B cell (primary cell): ENCODE measurements at regions of chr9 and their contacts with region 1.

Region 1: DNA sequence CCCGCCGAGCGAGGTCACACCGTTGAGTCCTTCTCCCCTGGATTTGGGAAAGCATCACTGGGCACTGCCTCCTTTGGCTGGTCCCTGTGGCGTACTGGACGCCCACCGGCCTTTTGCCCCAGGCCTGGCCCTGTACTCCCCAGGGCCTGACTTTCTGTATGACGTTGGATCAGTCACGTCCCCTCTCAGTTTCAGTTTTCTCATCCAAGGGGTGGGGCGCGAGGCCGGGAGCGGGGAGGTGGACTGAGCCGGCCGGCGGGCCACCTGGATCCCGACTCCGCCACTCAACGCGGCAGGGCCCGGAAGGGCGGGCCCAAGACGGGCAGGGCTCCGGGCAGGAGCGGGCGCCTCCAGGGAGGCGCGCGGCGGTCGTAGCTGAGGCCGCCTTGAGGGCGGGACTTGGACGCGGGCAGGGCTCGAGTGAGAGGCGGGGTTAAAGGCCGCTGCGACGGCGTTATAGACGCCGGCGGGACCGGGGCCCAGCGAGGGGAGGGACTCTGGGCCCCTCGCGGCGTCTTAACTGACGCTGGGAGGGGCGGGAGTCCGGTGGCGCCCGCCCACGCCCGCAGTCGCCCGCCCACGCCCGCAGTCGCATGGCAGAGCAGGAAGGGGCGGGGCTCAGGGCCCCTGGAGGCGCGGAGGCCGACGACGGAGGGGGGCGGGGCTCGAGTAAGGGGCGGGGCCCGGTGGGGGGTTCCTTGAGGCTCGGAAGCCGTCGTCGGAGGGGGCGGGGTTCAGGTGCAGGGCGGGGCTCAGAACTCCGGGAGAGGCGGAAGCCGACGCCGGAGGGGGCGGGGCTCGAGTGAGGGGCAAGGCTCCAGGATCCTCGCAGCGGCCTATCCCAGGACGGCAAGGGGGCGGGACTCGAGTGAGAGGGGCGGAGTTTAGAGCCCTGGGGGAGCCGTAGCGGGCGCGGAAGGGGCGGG is 549 bp upstream of the CARD19 start:
- DNase-seq: peak; percentile 100
- ATAC-seq: peak; percentile 81
- H3K4me3 ChIP-seq: peak overlapping the region in 4 of 5 experiments; percentile 58 to 81 (median 77)
- H3K4me3 Mint-ChIP-seq: peak overlapping the region; percentile 82
- H3K27ac ChIP-seq: peak overlapping the region; percentile 97 to 98
- H3K27ac Mint-ChIP-seq: peak overlapping the region; percentile 95
- H3K4me1 ChIP-seq: peaks cover 68 to 80% of the 10 kb centered on the region in 2 donors
- H3K4me1 Mint-ChIP-seq: peaks cover 76% of the 10 kb centered on the region
- H3K27me3 ChIP-seq: no peaks in the 10 kb centered on the region
- H3K27me3 Mint-ChIP-seq: no peaks in the 10 kb centered on the region
- CTCF ChIP-seq: no peak

Region 2: GRCh38 chr9:92115071-92115858 is 980.2 kb before region 1 on chr9 and contains the start of gene SPTLC1:
- CTCF ChIA-PET with region 1: no interaction called
- POLR2A ChIA-PET with region 1: no interaction called
- intact Hi-C with region 1: loop called (anchors 10 kb)
- DNase-seq: peak; percentile 97
- ATAC-seq: peak; percentile 98
- H3K4me3 ChIP-seq: peak within 1 kb of the TSS; percentile 63 to 91 (median 83)
- H3K4me3 Mint-ChIP-seq: peak within 1 kb of the TSS; percentile 99
- H3K27ac ChIP-seq: peak within 1 kb of the TSS; percentile 81 to 96
- H3K27ac Mint-ChIP-seq: peak within 1 kb of the TSS; percentile 99
- H3K4me1 ChIP-seq: peaks cover 15 to 16% of the 10 kb centered on the region in 2 donors
- H3K4me1 Mint-ChIP-seq: peaks cover 29% of the 10 kb centered on the region
- H3K27me3 ChIP-seq: no peaks in the 10 kb centered on the region
- H3K27me3 Mint-ChIP-seq: no peaks in the 10 kb centered on the region
- CTCF ChIP-seq: no peak
- total RNA-seq, gene SPTLC1: 53.5 and 57.3 TPM in 2 replicates

Region 3: DNA sequence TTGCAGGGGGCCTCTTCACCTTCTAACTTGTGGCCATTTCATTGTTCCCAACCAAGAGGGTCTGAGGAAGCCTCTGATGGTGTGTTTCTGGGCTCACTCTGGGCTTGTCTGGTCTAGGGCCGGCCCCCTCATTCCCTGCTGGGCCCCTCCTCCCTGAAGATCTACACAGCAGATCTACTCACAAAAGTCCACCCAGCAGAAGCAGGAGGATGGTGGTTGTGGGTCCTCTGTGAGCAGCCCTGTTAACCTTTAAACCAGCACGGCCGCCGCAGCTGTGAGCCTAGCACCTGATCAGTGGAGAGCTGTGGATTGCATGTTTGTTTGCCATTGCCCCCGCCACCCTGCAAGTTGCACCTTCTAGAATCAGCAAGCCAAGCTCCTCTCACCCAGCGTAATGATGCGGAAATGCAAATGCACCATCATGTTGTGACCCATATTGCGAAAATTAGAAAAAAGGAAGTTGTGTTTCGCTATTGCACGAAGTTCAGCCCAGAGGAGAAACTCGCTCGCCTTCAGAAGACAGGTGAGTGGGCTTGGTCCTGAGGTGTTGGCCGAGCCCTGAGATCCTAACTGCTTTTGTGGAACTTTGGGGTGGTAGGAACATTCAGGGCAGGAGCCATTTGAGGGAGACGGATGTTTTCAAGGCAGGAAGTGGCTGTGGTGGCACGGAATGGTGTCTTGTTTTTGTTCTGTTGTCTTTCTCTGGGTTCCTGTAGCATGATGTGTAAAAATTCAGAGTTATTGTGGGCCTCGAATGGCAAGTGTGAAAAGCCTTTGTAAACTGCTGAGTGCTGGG is 131.4 kb before region 1 on chr9:
- CTCF ChIA-PET with region 1: no interaction called
- POLR2A ChIA-PET with region 1: interaction called, 6 read pairs
- intact Hi-C with region 1: loop called (anchors 1 kb)
- DNase-seq: peak; percentile 88
- ATAC-seq: peak; percentile 80
- H3K4me3 ChIP-seq: peak overlapping the region; percentile 75 to 92 (median 86)
- H3K4me3 Mint-ChIP-seq: peak overlapping the region; percentile 96
- H3K27ac ChIP-seq: peak overlapping the region; percentile 78 to 83
- H3K27ac Mint-ChIP-seq: peak overlapping the region; percentile 98
- H3K4me1 ChIP-seq: peaks cover 58 to 74% of the 10 kb centered on the region in 2 donors
- H3K4me1 Mint-ChIP-seq: peaks cover 75% of the 10 kb centered on the region
- H3K27me3 ChIP-seq: no peaks in the 10 kb centered on the region
- H3K27me3 Mint-ChIP-seq: no peaks in the 10 kb centered on the region
- CTCF ChIP-seq: no peak

Region 4: DNA sequence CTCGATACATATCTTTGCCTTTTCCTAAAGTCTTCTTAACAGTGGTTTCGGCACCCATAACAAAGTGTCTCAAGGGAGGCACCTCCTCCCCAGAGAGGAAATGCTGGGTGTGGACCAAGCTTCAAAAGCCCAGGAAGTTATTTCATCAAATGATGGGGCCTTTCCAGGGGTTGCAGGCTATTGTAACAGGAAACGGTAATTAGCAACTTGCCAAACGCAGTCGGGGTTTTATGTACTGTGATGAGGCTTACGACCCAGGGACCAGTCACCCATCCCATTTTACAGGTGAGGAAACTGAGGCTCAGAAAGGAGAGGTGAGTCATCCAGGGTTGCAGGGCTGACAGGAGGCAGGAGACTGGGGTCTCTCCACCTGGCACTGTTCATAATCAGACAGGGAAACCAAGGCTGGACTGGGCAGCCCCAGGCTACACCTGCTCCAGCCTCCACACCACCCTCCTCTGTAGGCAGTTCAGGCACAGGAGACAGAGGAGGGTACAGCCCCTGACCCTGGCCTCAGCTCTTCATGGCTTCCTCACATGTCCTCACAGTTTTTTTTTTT is 66.9 kb before region 1 on chr9:
- CTCF ChIA-PET with region 1: no interaction called
- POLR2A ChIA-PET with region 1: no interaction called
- intact Hi-C with region 1: loop called (anchors 1 kb)
- DNase-seq: peak; percentile 81
- ATAC-seq: peak; percentile 91
- H3K4me3 ChIP-seq: peak overlapping the region in 4 of 5 experiments; percentile 4 to 38 (median 22)
- H3K4me3 Mint-ChIP-seq: peak overlapping the region; percentile 85
- H3K27ac ChIP-seq: peak overlapping the region; percentile 70 to 72
- H3K27ac Mint-ChIP-seq: peak overlapping the region; percentile 95
- H3K4me1 ChIP-seq: peaks cover 33 to 49% of the 10 kb centered on the region in 2 donors
- H3K4me1 Mint-ChIP-seq: peaks cover 61% of the 10 kb centered on the region
- H3K27me3 ChIP-seq: no peaks in the 10 kb centered on the region
- H3K27me3 Mint-ChIP-seq: no peaks in the 10 kb centered on the region
- CTCF ChIP-seq: no peak

Region 5: DNA sequence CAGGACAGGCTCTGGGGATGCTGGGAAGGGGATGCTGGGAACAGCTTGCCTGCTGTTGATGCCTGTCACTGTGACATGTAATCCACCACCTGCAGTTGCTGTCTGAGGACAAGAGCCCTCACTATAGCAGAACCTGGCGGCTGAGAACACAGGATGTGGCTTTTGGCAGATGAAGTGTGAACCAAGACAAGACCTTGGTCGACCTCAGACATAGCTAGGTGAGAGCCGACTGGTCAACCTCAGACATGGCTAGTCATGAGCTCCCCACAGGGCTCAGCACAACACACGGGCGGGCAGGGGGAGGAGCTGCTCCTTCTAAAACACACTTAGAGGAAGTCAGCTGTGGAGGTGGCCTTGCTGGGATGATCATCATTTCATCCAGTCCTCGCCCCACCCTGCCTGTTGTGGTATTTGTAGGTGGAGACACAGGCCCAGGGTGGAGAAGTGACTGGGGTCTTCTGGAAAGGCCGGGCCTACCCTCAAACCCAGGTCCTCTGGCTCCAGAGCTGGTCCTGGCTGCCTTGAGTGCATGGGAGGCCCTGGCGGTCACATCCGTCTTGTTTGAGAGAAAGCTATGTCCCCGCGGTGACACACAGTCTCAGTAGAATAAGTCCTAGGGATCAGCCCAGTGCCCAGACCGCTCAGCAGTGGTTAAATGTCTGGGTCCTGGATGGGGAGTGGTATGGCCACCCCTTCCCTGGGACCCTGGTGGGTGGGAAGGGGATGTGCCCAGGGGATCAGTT is 30.9 kb before region 1 on chr9:
- CTCF ChIA-PET with region 1: interaction called, 5 read pairs
- POLR2A ChIA-PET with region 1: interaction called, 36 read pairs
- intact Hi-C with region 1: loop called (anchors 1 kb)
- DNase-seq: peak; percentile 89
- ATAC-seq: peak; percentile 78
- H3K4me3 ChIP-seq: peak overlapping the region in 4 of 5 experiments; percentile 5 to 36 (median 18)
- H3K4me3 Mint-ChIP-seq: peak overlapping the region; percentile 92
- H3K27ac ChIP-seq: peak overlapping the region; percentile 74 to 78
- H3K27ac Mint-ChIP-seq: peak overlapping the region; percentile 99
- H3K4me1 ChIP-seq: peaks cover 63 to 65% of the 10 kb centered on the region in 2 donors
- H3K4me1 Mint-ChIP-seq: peaks cover 81% of the 10 kb centered on the region
- H3K27me3 ChIP-seq: no peaks in the 10 kb centered on the region
- H3K27me3 Mint-ChIP-seq: no peaks in the 10 kb centered on the region
- CTCF ChIP-seq: no peak

Region 6: GRCh38 chr9:93134015-93134739 is 38.7 kb after region 1 on chr9 and contains the start of gene NINJ1:
- CTCF ChIA-PET with region 1: no interaction called
- POLR2A ChIA-PET with region 1: no interaction called
- intact Hi-C with region 1: loop called (anchors 1 kb)
- DNase-seq: peak; percentile 94
- ATAC-seq: peak; percentile 85
- H3K4me3 ChIP-seq: peak within 1 kb of the TSS; percentile 16 to 77 (median 67)
- H3K4me3 Mint-ChIP-seq: peak within 1 kb of the TSS; percentile 90
- H3K27ac ChIP-seq: peak within 1 kb of the TSS; percentile 68 to 76
- H3K27ac Mint-ChIP-seq: peak within 1 kb of the TSS; percentile 84
- H3K4me1 ChIP-seq: peaks cover 25 to 33% of the 10 kb centered on the region in 2 donors
- H3K4me1 Mint-ChIP-seq: peaks cover 43% of the 10 kb centered on the region
- H3K27me3 ChIP-seq: peaks cover 0 to 13% (median 0%) of the 10 kb centered on the region in 4 experiments
- H3K27me3 Mint-ChIP-seq: no peaks in the 10 kb centered on the region
- CTCF ChIP-seq: no peak
- total RNA-seq, gene NINJ1: 7.6 and 8.3 TPM in 2 replicates

Region 7: DNA sequence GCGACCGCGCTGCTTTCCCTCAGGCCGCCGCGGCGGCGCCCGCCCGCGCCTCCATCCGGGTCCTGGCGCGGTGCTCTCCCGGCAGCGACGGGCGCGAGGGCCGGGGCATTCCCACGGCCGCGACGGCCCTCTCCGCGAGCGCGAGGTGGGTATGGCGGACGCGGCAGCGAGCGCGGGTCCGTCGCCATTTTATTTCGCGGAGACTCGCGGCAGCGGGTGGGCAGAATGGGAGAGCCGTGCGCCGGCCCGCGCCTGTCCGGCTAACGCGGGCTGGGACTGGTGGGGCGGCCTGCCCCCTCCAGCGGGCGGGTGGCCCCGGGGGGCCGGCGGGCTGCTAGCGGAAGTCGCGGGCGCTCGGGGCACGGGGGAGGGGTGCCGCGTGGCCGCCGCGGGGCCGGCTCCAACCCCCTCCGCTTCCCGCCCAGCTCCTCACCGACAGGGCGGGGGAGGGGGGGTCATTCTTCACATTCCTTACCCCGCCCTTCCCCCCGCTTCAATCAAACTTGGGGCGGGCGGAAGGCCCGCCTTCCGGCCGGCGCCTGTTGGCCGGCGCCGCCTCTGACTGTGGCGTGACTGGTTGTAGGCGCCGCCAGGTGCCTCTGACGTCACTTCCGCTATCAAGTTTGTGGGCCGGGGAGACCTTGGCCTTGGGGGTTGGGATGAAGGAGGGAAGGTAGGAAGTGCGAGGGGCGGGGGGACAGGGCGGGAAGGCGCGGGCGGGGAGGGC is 1070.9 kb after region 1 on chr9:
- CTCF ChIA-PET with region 1: no interaction called
- POLR2A ChIA-PET with region 1: interaction called, 8 read pairs
- intact Hi-C with region 1: loop called (anchors 2 kb)
- DNase-seq: peak; percentile 96
- ATAC-seq: peak; percentile 56
- H3K4me3 ChIP-seq: peak overlapping the region in 4 of 5 experiments; percentile 75 to 86 (median 80)
- H3K4me3 Mint-ChIP-seq: peak overlapping the region; percentile 92
- H3K27ac ChIP-seq: peak overlapping the region; percentile 86 to 99
- H3K27ac Mint-ChIP-seq: peak overlapping the region; percentile 95
- H3K4me1 ChIP-seq: peaks cover 36 to 46% of the 10 kb centered on the region in 2 donors
- H3K4me1 Mint-ChIP-seq: peaks cover 49% of the 10 kb centered on the region
- H3K27me3 ChIP-seq: no peaks in the 10 kb centered on the region
- H3K27me3 Mint-ChIP-seq: no peaks in the 10 kb centered on the region
- CTCF ChIP-seq: no peak